ENCODE measurements at regions of chr7 and their contacts with region 1.

Region 1: DNA sequence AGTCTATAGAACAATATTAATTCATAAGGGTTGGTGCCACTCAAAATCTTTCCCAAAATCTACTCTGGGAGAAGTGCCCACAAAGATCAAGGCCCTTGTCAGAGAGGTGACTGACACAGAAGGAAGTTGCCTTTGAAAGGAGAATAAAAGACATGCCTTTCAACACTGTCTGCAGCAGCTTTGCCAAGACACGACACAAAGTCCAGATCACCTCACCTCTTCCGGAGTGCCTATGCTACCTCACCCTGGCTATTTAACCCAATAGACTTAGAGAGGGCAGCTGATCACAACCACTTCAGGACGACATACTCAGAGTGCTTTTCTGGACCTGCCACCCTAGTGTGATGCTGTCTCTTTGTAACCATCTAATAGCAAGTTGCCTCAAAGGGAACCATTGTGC is 49.0 kb upstream of the YAE1 start:
- DNase-seq: no peak
- ATAC-seq: no peak
- H3K4me3 Mint-ChIP-seq: no peak overlapping the region
- H3K27ac Mint-ChIP-seq: no peak overlapping the region
- H3K4me1 Mint-ChIP-seq: peaks cover 4% of the 10 kb centered on the region
- H3K27me3 Mint-ChIP-seq: peaks cover 10% of the 10 kb centered on the region
- CTCF ChIP-seq: no peak

Region 2: DNA sequence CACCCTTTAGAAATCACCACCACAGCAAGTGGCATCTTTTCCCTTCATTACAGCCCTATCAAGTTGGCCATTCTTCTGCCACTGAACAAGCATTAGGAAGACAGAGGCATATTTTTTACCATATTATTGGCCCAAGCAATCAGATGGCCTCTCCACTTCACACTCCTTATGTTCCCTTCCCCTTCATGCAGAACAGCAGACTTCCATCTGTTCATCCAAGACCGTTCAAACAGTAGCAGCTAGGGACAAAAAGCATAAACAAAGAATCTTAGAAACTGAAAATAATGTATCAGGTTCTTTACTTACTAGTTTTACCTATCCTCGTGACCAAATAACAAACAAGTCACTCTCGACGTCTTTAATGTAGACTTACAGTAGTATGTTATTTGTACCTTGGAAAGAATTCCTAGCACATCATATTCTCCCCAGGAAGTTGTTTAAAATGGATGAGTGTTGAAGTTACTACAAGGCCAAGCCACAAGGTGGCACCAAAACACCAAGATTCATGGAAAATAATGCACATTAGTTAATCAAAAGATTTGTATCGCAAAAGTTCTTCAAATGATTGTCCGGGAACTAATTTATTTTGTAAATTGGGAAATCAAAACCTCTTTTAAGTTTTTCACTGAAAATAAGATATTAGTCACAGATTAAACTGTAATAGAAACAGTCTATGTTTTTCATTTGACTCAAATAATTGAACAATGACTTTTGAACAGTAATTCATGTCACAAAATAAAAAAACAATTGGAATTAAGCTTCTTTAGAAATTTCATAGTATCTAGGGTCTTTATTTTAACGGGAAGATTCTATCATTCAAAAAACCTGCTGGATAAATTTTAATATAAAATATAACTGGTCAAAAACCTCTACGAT is 720.4 kb before region 1 on chr7:
- CTCF ChIA-PET with region 1: interaction called, 7 read pairs
- POLR2A ChIA-PET with region 1: no interaction called
- intact Hi-C with region 1: loop called (anchors 1 kb)
- DNase-seq: no peak
- ATAC-seq: no peak
- H3K4me3 Mint-ChIP-seq: no peak overlapping the region
- H3K27ac Mint-ChIP-seq: no peak overlapping the region
- H3K4me1 Mint-ChIP-seq: no peaks in the 10 kb centered on the region
- H3K27me3 Mint-ChIP-seq: no peaks in the 10 kb centered on the region
- CTCF ChIP-seq: no peak

Region 3: GRCh38 chr7:38932509-38933168 is 584.6 kb before region 1 on chr7:
- CTCF ChIA-PET with region 1: no interaction called
- POLR2A ChIA-PET with region 1: no interaction called
- intact Hi-C with region 1: loop called (anchors 2 kb)
- DNase-seq: no peak
- ATAC-seq: no peak
- H3K4me3 Mint-ChIP-seq: no peak overlapping the region
- H3K27ac Mint-ChIP-seq: no peak overlapping the region
- H3K4me1 Mint-ChIP-seq: no peaks in the 10 kb centered on the region
- H3K27me3 Mint-ChIP-seq: peaks cover 3% of the 10 kb centered on the region
- CTCF ChIP-seq: peak; percentile 55

Region 4: GRCh38 chr7:39465055-39465929 is 51.9 kb before region 1 on chr7:
- CTCF ChIA-PET with region 1: no interaction called
- POLR2A ChIA-PET with region 1: no interaction called
- intact Hi-C with region 1: no loop called
- DNase-seq: no peak
- ATAC-seq: peak; percentile 50
- H3K4me3 Mint-ChIP-seq: no peak overlapping the region
- H3K27ac Mint-ChIP-seq: no peak overlapping the region
- H3K4me1 Mint-ChIP-seq: peaks cover 4% of the 10 kb centered on the region
- H3K27me3 Mint-ChIP-seq: peaks cover 8% of the 10 kb centered on the region
- CTCF ChIP-seq: peak; percentile 60

Measured in activated B cell treated with CpG ODN at 0.5 μM for 24 hours (primary cell).